Caco-2 (cell line): ENCODE measurements at regions of chr2 and their contacts with region 1.

Region 1: GRCh38 chr2:88159955-88160415 is 10.2 kb upstream of the THNSL2 start:
- DNase-seq: peak; percentile 73 to 76
- H3K4me3 ChIP-seq: no peak overlapping the region
- H3K4me3 Mint-ChIP-seq: no peak overlapping the region
- H3K27ac Mint-ChIP-seq: no peak overlapping the region
- H3K4me1 ChIP-seq: no peaks in the 10 kb centered on the region
- H3K4me1 Mint-ChIP-seq: no peaks in the 10 kb centered on the region
- H3K27me3 ChIP-seq: no peaks in the 10 kb centered on the region
- H3K27me3 Mint-ChIP-seq: no peaks in the 10 kb centered on the region
- CTCF ChIP-seq: peak; percentile 87 to 89

Region 2: DNA sequence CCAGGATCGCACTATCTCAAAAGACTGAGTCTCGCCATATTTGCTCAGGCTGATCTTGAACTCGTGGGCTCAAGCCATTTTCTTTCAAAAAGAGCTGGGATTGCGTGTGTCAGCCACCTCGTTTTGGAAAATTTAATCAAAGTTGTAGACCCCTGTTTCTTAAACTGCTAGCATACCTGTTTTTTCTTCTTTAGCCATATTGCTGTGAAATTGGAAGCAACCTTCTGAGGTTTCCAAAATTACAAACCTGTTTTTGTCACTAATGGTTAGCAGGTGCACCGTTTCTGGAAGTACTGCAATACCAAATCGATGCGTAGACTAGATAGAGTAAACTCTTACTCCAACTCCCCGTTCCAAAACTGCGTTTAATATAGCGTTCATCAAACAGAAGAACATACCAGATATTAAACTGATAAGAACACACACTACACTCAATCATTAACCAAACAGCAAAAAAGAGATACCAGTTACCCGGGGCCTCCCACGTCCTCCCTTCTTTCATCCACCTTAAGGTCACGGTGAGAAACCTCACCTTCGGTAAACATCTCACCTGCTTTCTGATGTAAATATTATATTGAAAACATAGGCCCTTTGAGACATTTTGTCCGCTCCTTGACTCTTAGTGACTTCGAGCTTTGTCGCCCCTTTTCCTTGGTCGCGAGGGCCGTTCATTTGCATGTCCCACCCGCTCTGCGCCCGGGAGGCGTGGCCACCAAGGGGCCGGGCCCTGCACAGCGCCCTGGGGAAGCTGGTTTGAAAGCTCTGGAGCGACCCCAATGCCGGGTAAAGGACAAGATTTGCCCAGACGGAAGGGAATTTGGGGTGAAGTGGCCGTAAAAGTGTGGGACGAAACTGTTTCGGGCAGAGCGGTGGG is 143.7 kb before region 1 on chr2 and contains the start of gene RNU2-63P:
- CTCF ChIA-PET with region 1: no interaction called
- POLR2A ChIA-PET with region 1: no interaction called
- intact Hi-C with region 1: loop called (anchors 1 kb)
- DNase-seq: peak; percentile 86 to 87
- H3K4me3 ChIP-seq: peak within 1 kb of the TSS; percentile 92
- H3K4me3 Mint-ChIP-seq: peak within 1 kb of the TSS; percentile 83
- H3K27ac Mint-ChIP-seq: peak within 1 kb of the TSS; percentile 99
- H3K4me1 ChIP-seq: no peaks in the 10 kb centered on the region; the same call in 1 of the 2 replicates
- H3K4me1 Mint-ChIP-seq: peaks cover 15% of the 10 kb centered on the region
- H3K27me3 ChIP-seq: no peaks in the 10 kb centered on the region
- H3K27me3 Mint-ChIP-seq: peaks cover 3% of the 10 kb centered on the region
- CTCF ChIP-seq: no peak
- total RNA-seq, gene RNU2-63P: 18.6 and 19.4 TPM in 2 replicates

Region 3: DNA sequence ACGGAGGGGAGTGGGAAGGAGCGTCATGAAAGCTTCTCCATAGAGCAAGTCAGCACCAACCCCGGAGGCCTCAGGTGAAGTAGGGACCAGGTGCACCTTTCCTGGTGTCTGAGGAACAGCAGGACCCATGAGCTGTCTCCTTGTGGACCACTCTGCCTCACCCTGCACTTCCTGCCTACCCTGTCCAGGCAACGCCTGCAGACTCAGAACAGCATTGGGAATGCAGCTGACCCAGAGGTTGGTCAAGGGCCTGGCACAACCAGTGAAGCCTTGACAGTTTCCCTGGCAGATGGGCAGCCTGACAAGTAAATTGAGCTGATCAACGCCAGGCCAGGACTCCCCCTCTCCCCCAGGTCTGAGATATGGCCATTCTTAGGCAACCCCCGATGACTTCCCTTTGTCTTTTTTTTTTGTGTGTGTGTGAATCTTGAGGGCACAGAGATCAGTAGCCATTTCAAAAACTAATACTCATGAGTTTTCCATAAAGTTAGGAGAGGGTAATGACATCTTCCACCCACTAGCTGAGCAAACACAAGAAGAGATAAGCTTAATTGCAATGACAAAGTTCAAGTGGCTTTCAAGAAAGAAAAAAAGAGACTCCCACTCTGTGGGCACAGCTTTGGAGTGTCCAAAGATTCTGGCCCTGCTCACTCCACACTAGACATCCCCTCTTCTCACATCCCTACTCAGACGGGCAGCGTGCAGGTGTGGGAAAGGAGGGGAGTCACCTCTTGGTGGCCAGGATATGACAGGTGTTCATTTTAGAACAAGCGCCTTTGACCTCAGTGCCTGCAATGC is 28.6 kb before region 1 on chr2:
- CTCF ChIA-PET with region 1: interaction called, 4 read pairs
- POLR2A ChIA-PET with region 1: interaction called, 4 read pairs
- intact Hi-C with region 1: loop called (anchors 1 kb)
- DNase-seq: peak in 1 of 2 experiments; percentile 47
- H3K4me3 ChIP-seq: no peak overlapping the region
- H3K4me3 Mint-ChIP-seq: peak overlapping the region; percentile 30
- H3K27ac Mint-ChIP-seq: peak overlapping the region; percentile 75
- H3K4me1 ChIP-seq: peaks cover 63% of the 10 kb centered on the region
- H3K4me1 Mint-ChIP-seq: peaks cover 59% of the 10 kb centered on the region
- H3K27me3 ChIP-seq: no peaks in the 10 kb centered on the region
- H3K27me3 Mint-ChIP-seq: no peaks in the 10 kb centered on the region
- CTCF ChIP-seq: no peak

Region 4: DNA sequence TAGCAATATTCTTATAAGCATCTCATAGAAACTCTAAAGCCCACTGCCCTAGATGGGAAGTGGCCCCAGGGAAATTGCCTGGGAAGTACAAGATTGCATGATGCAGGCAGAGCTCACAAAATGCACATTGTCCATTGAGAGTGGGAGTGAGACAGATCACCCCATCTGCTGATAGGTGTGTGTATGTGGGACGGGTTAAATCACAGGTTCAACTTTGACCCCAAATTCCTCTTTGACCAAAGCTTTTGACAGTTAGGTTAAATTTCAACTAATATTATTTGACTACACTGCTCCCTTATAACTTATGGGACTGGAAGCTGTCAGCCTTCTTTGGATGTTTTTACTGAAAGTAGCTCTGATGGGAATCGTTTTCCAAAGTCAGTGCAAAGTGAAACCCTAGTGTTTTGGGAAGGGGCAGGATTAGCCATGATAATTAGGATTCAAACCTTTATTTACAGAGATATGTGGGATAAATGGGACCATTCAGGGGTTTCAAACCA is 20.7 kb before region 1 on chr2:
- CTCF ChIA-PET with region 1: no interaction called
- POLR2A ChIA-PET with region 1: no interaction called
- intact Hi-C with region 1: loop called (anchors 1 kb)
- DNase-seq: peak; percentile 74 to 80
- H3K4me3 ChIP-seq: no peak overlapping the region
- H3K4me3 Mint-ChIP-seq: no peak overlapping the region
- H3K27ac Mint-ChIP-seq: peak overlapping the region; percentile 51
- H3K4me1 ChIP-seq: peaks cover 31% of the 10 kb centered on the region
- H3K4me1 Mint-ChIP-seq: peaks cover 21% of the 10 kb centered on the region
- H3K27me3 ChIP-seq: no peaks in the 10 kb centered on the region
- H3K27me3 Mint-ChIP-seq: no peaks in the 10 kb centered on the region
- CTCF ChIP-seq: no peak